Cardiac septum (tissue), 1 donor: ENCODE measurements at regions of chr12 and their contacts with region 1.

Region 1: DNA sequence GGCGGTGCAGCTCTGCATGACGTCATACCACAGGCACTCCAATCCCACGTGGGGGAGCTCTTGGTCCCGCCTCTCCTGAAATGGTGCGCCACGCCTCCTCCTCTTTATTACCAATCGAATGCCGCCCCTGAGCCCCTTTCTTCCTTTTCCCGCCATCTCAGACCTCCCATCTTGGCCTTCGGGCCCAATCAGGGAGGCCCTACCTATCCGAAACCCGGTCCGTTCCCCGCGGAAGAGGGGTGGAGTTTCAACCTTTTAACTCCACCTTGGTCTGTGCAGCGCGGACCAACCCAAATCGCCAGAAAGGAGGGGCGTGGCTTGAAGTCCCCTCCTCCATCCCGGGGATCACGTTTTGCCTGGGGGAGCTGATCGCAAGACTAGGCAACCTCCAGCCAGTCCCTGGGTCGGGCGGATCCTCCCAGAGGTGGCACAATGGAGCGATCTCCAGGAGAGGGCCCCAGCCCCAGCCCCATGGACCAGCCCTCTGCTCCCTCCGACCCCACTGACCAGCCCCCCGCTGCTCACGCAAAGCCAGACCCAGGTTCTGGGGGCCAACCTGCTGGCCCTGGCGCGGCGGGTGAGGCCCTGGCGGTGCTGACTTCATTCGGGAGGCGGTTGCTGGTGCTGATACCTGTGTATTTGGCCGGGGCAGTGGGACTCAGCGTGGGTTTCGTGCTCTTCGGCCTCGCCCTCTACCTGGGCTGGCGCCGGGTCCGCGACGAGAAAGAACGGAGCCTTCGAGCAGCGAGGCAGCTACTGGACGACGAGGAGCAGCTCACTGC is at the start of gene ESYT1:
- DNase-seq: peak; percentile 99
- total RNA-seq, gene ESYT1: 36.2 TPM

Region 2: DNA sequence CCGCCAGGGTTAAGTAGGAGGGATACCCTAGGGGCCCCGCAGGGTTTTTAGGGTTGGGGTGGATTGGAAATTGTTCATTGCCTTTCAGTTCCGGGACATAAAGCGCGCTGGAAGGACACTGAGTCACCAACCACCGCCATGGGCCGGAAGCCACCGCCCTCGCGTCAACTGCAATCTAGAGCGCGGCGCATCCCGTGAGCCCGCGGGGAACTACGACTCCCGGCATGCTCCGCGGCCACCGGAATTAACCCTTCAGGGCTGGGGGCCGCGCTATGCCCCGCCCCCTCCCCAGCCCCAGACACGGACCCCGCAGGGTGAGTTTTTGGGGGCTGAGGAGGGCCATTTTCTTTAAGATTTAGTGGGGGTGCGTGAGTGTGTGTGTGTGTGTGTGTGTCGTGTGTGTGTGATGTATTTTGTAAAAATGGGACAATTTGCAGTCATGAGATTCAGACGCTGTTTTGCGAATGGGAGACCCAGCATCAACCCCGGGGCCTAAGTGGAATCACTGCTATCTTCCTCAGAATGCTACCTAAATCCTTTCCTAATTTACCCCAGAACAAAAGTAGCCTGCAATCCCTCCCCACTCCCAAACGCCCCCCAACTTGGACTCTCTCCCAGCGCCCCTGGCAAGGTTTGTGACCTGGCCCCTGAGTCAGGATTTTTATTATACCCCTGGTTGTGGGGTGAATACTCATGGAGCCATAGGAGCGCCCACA is 24.4 kb after region 1 on chr12 and contains the start of gene MYL6B:
- intact Hi-C with region 1: loop called (anchors 2 kb)
- DNase-seq: peak; percentile 96
- total RNA-seq, gene MYL6B: 37.6 TPM

Region 3: GRCh38 chr12:56158029-56158925 is 30.2 kb after region 1 on chr12 and contains the start of gene MYL6:
- intact Hi-C with region 1: loop called (anchors 2 kb)
- DNase-seq: peak; percentile 99
- total RNA-seq, gene MYL6: 792 TPM

Region 4: DNA sequence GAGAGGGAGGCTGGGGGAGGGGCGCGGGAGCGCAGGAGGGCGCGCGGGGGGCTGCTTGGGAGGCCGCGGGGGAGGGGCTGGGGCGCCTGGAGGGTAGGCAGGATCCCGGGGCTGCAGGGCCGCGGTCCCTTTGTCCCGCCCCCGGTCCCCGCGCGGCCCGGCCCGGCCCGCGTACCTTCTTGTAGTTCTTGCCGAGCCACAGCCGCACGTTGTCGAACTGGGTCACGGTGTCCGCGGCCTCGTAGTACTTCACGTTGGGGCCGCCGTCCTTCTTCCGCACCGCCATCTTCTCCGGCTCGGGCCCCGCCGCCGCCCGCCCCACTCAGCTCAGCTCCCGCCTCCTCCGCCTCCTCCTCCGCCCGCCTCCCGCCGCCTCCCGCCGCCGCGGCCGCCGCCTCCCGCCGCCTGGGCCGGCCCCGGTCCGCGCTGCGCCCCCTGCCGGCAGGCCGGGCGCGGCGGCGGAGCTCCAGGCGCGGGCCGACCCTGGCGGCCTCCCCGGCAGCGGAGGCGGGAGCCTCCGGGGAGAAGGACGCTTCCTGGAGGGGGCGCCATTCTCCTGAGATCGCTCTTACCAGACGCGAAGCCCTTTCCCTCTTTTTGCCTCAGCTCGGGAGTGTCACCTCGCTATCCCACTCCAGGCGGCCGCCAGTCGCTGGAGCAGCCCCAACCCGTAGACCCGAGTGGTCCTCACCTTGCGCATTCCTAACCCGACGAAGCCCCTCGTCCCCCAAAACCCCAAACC is 61.3 kb after region 1 on chr12 and contains the start of gene SMARCC2:
- intact Hi-C with region 1: loop called (anchors 1 kb)
- DNase-seq: peak; percentile 94
- total RNA-seq, gene SMARCC2: 71.5 TPM

Region 5: GRCh38 chr12:56468216-56469006 is 340.3 kb after region 1 on chr12 and contains the start of gene SPRYD4:
- intact Hi-C with region 1: loop called (anchors 10 kb)
- DNase-seq: peak; percentile 97
- total RNA-seq, gene SPRYD4: 3.3 TPM